HepG2 (cell line): ENCODE measurements at regions of chr6 and their contacts with region 1.

Region 1: GRCh38 chr6:121399966-121400365 is 35.5 kb upstream of the GJA1 start:
- DNase-seq: no peak
- ATAC-seq: no peak; the same call in 1 of the 3 replicates
- H3K4me3 ChIP-seq: no peak overlapping the region
- H3K27ac ChIP-seq: no peak overlapping the region
- H3K4me1 ChIP-seq: no peaks in the 10 kb centered on the region
- H3K27me3 ChIP-seq: peaks cover 0 to 9% of the 10 kb centered on the region in 2 experiments; a peak in 1 of 5 replicates
- CTCF ChIP-seq: no peak
- EP300 ChIP-seq: no peak
- POLR2A ChIP-seq: no peak
- RAD21 ChIP-seq: no peak

Region 2: DNA sequence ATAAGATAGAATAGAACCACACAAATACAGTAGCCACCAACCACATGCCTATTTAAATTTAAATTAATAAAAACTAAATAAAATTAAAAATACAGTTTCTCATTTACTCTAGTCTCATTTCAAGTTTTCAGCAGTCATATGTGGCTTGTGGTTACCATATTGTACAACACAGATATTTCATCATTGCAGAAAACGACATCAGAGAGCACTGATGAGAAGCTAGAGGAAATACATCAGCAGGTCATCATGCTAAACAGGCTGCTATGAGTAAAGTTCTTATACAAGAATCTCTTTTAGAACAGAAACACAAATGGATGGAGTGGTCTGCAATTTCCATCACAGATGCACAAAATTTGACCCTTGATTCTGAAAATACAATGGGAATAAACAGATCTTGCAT is 102.3 kb before region 1 on chr6:
- CTCF ChIA-PET with region 1: no interaction called
- POLR2A ChIA-PET with region 1: no interaction called
- in situ Hi-C with region 1: no loop called
- intact Hi-C with region 1: no loop called
- DNase-seq: no peak
- ATAC-seq: no peak
- H3K4me3 ChIP-seq: no peak overlapping the region
- H3K27ac ChIP-seq: no peak overlapping the region
- H3K4me1 ChIP-seq: no peaks in the 10 kb centered on the region
- H3K27me3 ChIP-seq: no peaks in the 10 kb centered on the region; a peak in 1 of 5 replicates
- CTCF ChIP-seq: no peak
- EP300 ChIP-seq: no peak
- POLR2A ChIP-seq: no peak
- RAD21 ChIP-seq: no peak

Region 3: GRCh38 chr6:121319112-121319553 is 80.8 kb before region 1 on chr6:
- CTCF ChIA-PET with region 1: interaction called, 4 read pairs
- POLR2A ChIA-PET with region 1: no interaction called
- in situ Hi-C with region 1: no loop called
- intact Hi-C with region 1: loop called (anchors 1 kb)
- DNase-seq: peak; percentile 41
- ATAC-seq: peak; percentile 87
- H3K4me3 ChIP-seq: no peak overlapping the region; a peak in 1 of 6 replicates
- H3K27ac ChIP-seq: no peak overlapping the region
- H3K4me1 ChIP-seq: no peaks in the 10 kb centered on the region
- H3K27me3 ChIP-seq: no peaks in the 10 kb centered on the region
- CTCF ChIP-seq: peak; percentile 46
- EP300 ChIP-seq: no peak
- POLR2A ChIP-seq: no peak
- RAD21 ChIP-seq: no peak

Region 4: DNA sequence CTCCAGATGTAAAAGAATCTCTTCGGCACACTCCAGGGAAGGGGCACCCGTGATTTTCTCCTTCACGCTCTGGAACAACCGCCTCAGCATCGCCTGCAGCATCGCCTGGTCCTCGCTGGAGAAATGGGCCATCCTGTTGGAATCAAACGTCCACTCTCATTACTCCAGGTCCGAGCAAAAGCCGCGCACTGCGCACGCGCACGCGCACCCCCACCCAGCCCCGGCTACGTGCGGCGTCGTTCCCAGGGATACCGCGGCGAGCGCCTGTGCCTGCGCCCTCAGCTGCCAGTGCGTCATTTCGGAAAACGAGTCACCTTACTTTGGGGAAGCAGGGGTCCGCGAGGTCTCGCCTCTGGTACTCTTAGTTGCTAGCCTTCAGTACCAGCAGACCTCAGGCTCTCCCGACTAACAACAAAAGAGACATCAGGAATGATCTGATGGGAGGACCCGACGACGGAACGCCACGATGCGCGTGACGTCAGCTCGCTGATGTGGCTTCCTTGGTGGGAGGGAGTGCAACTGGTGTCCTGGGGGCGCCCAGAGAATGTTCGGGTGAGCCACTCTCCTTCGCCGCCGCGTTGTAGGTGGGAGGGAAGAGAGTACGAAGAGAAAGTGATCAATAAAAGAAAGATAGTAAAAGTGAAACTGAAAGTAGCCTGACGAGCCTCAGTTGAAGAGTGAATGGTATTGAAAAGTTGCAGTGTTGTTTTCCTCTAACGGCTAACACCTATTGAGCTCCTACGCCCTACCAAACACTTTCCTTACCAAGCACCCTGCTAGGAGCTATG is 65.5 kb before region 1 on chr6 and contains the start of gene TBC1D32:
- CTCF ChIA-PET with region 1: no interaction called
- POLR2A ChIA-PET with region 1: no interaction called
- in situ Hi-C with region 1: no loop called
- intact Hi-C with region 1: loop called (anchors 5 kb)
- DNase-seq: peak; percentile 82
- ATAC-seq: peak; percentile 99
- H3K4me3 ChIP-seq: peak within 1 kb of the TSS; percentile 69 to 76 (median 70)
- H3K27ac ChIP-seq: peak within 1 kb of the TSS; percentile 26
- H3K4me1 ChIP-seq: peaks cover 16% of the 10 kb centered on the region; the same call in 1 of the 2 replicates
- H3K27me3 ChIP-seq: peaks cover 0 to 2% of the 10 kb centered on the region in 2 experiments; a peak in 1 of 5 replicates
- CTCF ChIP-seq: peak; percentile 37
- EP300 ChIP-seq: no peak
- POLR2A ChIP-seq: peak; percentile 54 to 57; a peak in 2 of 4 replicates
- RAD21 ChIP-seq: no peak
- total RNA-seq, gene TBC1D32: 3.1 and 4.8 TPM in 2 replicates